ENCODE measurements at regions of chr20 and their contacts with region 1.

Region 1: GRCh38 chr20:45771182-45771759 is 20.4 kb downstream of the WFDC3 start:
- DNase-seq: peak; percentile 48
- ATAC-seq: peak; percentile 88
- H3K4me3 ChIP-seq: no peak overlapping the region
- H3K27ac ChIP-seq: no peak overlapping the region
- H3K4me1 ChIP-seq: no peaks in the 10 kb centered on the region; the same call in 1 of the 2 replicates
- H3K27me3 ChIP-seq: no peaks in the 10 kb centered on the region
- CTCF ChIP-seq: peak; percentile 83 to 97 (median 92); a peak in 5 of 6 replicates
- EP300 ChIP-seq: no peak
- POLR2A ChIP-seq: no peak
- RAD21 ChIP-seq: peak; percentile 99

Region 2: DNA sequence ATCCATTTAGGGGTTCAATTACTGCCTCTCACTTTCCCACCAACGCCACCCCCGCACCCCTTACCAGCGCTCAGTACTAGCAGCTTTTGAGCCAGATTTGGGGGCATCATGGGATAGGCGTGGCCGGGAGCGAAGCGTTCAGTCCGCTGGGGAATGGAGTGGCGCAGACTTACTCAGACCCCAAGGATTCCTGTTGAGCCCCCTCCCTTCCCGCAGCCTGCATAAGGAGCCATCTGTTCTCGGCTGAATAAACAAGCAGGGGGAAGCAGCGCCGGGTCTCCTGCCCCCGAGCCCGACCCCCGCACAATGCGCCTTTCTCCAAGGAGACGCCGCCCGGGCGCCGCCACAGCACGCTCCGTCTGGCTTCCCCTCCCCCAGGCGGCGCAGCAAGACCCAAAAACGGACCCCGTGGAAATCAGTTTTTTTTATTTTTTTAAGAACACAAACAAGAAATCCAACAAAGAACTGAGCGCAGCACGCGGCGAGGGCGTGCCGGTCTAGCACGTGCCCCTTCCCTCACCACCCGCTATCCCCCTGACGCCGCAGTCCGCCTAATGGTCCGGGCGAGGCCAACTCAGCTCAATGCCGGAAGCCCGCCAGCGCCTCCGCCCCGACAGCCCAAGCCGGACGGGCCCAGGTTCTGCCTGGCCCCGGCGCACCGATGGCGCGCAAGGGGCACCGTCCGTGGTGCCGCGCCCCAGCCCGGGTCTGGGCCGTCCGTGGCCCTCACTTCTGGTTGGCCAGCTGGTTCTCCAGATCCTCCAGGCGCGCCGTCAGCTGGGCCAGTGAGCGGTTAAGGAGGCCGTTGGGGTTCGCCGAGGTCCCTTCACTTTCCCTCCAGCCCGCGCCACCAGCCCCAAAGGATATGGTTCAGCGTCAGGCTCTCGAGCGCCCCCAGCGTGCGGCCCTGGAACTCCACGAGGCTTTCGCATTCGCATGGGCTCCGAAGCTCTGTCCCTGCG is 477.9 kb before region 1 on chr20:
- CTCF ChIA-PET with region 1: interaction called, 13 read pairs
- POLR2A ChIA-PET with region 1: no interaction called
- RAD21 ChIA-PET with region 1: interaction called, 8 read pairs
- SMC1A ChIA-PET with region 1: interaction called, 9 read pairs
- in situ Hi-C with region 1: no loop called
- intact Hi-C with region 1: no loop called
- DNase-seq: no peak
- ATAC-seq: peak; percentile 93
- H3K4me3 ChIP-seq: peak overlapping the region; percentile 30; the same call in 1 of the 2 replicates
- H3K27ac ChIP-seq: no peak overlapping the region
- H3K4me1 ChIP-seq: no peaks in the 10 kb centered on the region
- H3K27me3 ChIP-seq: peaks cover 6 to 7% of the 10 kb centered on the region in 2 experiments; a peak in 3 of 4 replicates
- CTCF ChIP-seq: peak; percentile 83 to 96 (median 89)
- EP300 ChIP-seq: no peak
- POLR2A ChIP-seq: no peak
- RAD21 ChIP-seq: peak; percentile 25; the same call in 1 of the 2 replicates

Region 3: DNA sequence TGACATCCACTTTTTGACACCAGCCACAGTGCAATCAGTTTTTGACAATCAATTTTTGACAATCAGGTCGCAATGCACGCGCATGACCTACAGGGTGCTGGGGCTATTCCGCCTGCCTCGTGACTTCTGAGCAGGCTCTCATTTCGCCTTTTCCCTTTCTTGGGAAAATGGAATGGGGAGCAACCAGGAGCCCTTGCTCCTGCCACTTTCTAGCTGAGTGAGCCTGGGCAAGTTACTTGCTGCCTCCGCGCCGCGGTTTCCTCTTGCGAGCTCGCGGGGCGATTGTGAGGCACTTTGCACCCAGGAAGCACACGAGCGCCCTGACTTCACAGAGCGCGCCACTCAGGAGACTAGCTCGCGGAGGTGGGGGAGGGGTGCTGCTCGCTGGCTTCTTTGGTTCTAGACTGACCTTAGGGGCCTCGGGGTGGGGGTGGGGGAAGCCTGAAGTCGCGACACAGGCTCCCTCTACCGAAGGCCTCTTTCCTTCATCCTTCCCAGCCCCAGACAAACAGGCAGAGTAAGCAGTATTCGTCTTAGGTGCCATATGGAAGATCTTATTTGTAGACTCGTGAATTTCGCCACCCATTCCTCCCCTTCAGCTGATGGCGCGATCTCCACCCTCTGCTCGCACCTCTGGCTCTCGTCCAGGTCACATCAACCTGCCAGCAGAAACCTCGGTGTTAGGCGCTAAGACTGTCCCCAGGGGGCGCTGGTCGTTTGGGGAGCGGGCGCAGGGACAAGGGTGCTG is 397.7 kb before region 1 on chr20:
- CTCF ChIA-PET with region 1: interaction called, 21 read pairs
- POLR2A ChIA-PET with region 1: no interaction called
- RAD21 ChIA-PET with region 1: interaction called, 10 read pairs
- SMC1A ChIA-PET with region 1: interaction called, 9 read pairs
- in situ Hi-C with region 1: no loop called
- intact Hi-C with region 1: no loop called
- DNase-seq: no peak
- ATAC-seq: peak; percentile 98
- H3K4me3 ChIP-seq: peak overlapping the region; percentile 59; the same call in 1 of the 2 replicates
- H3K27ac ChIP-seq: no peak overlapping the region
- H3K4me1 ChIP-seq: peaks cover 15% of the 10 kb centered on the region
- H3K27me3 ChIP-seq: no peaks in the 10 kb centered on the region
- CTCF ChIP-seq: peak; percentile 82 to 90 (median 89)
- EP300 ChIP-seq: no peak
- POLR2A ChIP-seq: no peak
- RAD21 ChIP-seq: peak; percentile 88

Region 4: DNA sequence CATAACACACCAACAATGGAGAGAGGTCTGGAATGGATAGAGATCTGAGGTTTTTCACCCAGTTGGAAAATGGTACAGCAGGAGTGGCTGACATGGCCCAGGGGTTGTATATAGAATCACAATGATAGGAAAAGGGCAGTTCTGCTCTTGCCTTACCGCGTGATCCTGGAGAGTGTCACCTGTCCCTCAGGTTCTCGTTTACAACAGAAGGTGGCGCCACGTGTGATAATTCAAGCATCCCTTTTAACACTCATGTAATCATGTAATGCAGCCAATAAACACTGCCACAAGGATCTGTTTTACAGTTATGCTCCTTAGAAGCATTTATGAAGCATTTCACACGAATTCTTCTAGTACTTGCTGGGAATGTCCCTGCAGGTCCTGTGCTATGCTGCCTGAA is 314.6 kb before region 1 on chr20:
- CTCF ChIA-PET with region 1: interaction called, 47 read pairs
- POLR2A ChIA-PET with region 1: interaction called, 5 read pairs
- RAD21 ChIA-PET with region 1: interaction called, 10 read pairs
- SMC1A ChIA-PET with region 1: interaction called, 12 read pairs
- in situ Hi-C with region 1: loop called (anchors 5 kb)
- intact Hi-C with region 1: loop called (anchors 1 kb)
- DNase-seq: no peak
- ATAC-seq: peak; percentile 86
- H3K4me3 ChIP-seq: no peak overlapping the region
- H3K27ac ChIP-seq: no peak overlapping the region
- H3K4me1 ChIP-seq: no peaks in the 10 kb centered on the region
- H3K27me3 ChIP-seq: peaks cover 0 to 3% of the 10 kb centered on the region in 2 experiments; a peak in 1 of 4 replicates
- CTCF ChIP-seq: peak; percentile 35 to 47 (median 46); a peak in 4 of 6 replicates
- EP300 ChIP-seq: no peak
- POLR2A ChIP-seq: no peak
- RAD21 ChIP-seq: peak; percentile 27

Region 5: DNA sequence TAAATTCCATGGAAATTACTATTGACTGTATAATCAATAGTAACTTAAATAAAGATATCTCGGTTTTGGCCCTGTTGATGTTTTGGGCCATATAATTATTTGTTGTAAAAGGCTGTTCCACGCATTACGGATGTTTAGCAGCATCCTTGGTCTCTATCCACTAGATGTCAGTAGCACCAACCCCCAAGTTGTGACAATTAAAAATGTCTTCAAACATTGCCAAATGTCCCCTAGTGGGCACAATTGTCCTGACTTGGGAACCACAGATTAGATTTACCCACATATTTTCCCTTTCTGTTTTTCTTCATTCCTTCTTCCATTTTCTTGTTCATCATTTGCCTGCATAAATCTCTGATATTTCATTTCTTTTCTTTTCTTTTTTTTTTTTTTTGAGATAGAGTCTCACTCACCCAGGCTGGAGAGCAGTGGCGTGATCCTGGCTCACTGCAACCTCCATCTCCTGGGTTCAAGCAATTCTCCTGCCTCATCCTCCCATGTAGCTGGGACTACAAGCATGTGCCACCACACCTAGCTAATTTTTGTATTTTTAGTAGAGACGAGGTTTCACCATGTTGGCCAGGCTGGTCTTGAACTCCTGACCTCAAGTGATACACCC is 178.6 kb before region 1 on chr20:
- CTCF ChIA-PET with region 1: interaction called, 46 read pairs
- POLR2A ChIA-PET with region 1: no interaction called
- RAD21 ChIA-PET with region 1: interaction called, 12 read pairs
- SMC1A ChIA-PET with region 1: interaction called, 17 read pairs
- in situ Hi-C with region 1: no loop called
- intact Hi-C with region 1: loop called (anchors 1 kb)
- DNase-seq: no peak
- ATAC-seq: peak; percentile 92
- H3K4me3 ChIP-seq: no peak overlapping the region
- H3K27ac ChIP-seq: no peak overlapping the region
- H3K4me1 ChIP-seq: no peaks in the 10 kb centered on the region
- H3K27me3 ChIP-seq: no peaks in the 10 kb centered on the region; a peak in 2 of 4 replicates
- CTCF ChIP-seq: peak; percentile 71 to 94 (median 82)
- EP300 ChIP-seq: no peak
- POLR2A ChIP-seq: no peak
- RAD21 ChIP-seq: peak; percentile 71

Region 6: DNA sequence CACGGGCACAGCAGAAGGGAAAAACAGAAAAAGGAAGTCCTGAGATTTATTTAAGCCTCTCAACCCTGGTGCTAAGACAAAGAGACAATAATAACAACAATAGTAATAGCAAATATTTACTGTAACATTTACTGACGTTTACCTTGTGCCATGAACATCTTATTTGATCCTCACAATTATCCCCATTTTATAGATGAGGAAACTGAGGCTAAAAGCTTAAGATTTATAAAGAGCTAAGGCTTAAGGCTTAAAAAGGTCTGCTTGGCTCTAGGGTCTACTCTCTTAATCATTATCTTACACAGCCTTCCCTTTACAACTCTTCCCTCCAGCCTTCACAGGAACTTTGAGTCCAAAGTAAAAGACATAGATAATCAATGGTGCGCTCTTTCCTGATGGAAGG is 17.1 kb after region 1 on chr20:
- CTCF ChIA-PET with region 1: interaction called, 16 read pairs
- POLR2A ChIA-PET with region 1: interaction called, 3 read pairs
- RAD21 ChIA-PET with region 1: interaction called, 7 read pairs
- SMC1A ChIA-PET with region 1: interaction called, 3 read pairs
- in situ Hi-C with region 1: no loop called
- intact Hi-C with region 1: no loop called
- DNase-seq: no peak
- ATAC-seq: no peak
- H3K4me3 ChIP-seq: no peak overlapping the region
- H3K27ac ChIP-seq: no peak overlapping the region
- H3K4me1 ChIP-seq: 0 out of 2 replicates have a peak, but pooled peaks cover 5% of the 10 kb centered on the region
- H3K27me3 ChIP-seq: no peaks in the 10 kb centered on the region
- CTCF ChIP-seq: no peak
- EP300 ChIP-seq: no peak
- POLR2A ChIP-seq: no peak
- RAD21 ChIP-seq: no peak

Region 7: GRCh38 chr20:45823949-45824835 is 52.9 kb after region 1 on chr20:
- CTCF ChIA-PET with region 1: no interaction called
- POLR2A ChIA-PET with region 1: no interaction called
- RAD21 ChIA-PET with region 1: no interaction called
- SMC1A ChIA-PET with region 1: no interaction called
- in situ Hi-C with region 1: no loop called
- intact Hi-C with region 1: no loop called
- DNase-seq: no peak
- ATAC-seq: peak; percentile 85
- H3K4me3 ChIP-seq: no peak overlapping the region
- H3K27ac ChIP-seq: no peak overlapping the region
- H3K4me1 ChIP-seq: peaks cover 5% of the 10 kb centered on the region; the same call in 1 of the 2 replicates
- H3K27me3 ChIP-seq: no peaks in the 10 kb centered on the region; a peak in 2 of 4 replicates
- CTCF ChIP-seq: peak; percentile 28 to 54 (median 51); a peak in 4 of 6 replicates
- EP300 ChIP-seq: no peak
- POLR2A ChIP-seq: no peak
- RAD21 ChIP-seq: no peak

Measured in GM12878 (cell line).